Tibial artery (tissue), 4 donors: ENCODE measurements at regions of chr16 and their contacts with region 1.

Region 1: DNA sequence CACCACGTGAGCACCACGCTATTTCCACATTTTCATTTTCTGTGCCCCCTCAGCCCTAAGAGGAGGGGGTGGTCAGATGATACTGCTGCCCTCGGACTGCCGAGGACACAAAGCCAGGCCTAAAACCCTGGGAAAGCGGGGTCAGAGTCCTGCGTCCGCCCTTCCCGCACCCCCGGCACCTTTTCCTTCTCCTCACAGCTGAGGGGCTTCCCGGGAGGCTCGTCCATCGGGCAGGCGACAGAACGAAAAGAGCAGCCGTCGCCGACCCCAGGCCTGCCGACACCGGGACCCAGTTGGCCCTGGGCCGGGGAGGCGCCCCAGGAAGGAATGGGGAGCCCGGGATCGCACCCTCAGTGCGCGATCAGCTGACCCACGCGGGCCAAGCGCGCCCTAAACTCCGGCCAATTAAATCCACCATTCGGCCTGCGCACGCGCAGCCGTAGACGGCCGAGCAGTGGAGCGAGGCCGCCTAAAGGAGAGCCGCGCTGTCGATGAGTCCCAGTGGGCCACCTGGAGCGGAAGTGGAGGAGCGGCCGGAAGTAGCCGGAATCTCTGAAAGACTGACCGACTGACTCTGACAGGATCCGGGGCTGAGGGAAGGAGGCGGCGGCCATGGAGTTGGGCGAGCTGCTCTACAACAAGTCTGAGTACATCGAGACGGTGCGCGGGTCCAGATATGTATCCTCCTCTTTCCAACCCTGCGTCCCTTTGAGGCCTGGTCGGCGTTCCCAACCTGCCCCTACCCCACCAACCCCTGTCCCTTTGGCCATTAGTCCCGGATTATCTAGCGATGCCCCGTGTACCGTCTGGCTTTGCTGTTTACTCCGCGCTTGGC is at the starts of genes DCTN5 and PALB2:
- DNase-seq: peak; percentile 93 to 96
- H3K4me3 ChIP-seq: peak within 1 kb of the TSS; percentile 64 to 87
- H3K27ac ChIP-seq: peak within 1 kb of the TSS; percentile 76 to 90
- H3K4me1 ChIP-seq: peaks cover 0 to 29% (median 19%) of the 10 kb centered on the region in 4 donors
- H3K27me3 ChIP-seq: no peaks in the 10 kb centered on the region
- CTCF ChIP-seq: peak in 1 of 2 experiments; percentile 9

Region 2: DNA sequence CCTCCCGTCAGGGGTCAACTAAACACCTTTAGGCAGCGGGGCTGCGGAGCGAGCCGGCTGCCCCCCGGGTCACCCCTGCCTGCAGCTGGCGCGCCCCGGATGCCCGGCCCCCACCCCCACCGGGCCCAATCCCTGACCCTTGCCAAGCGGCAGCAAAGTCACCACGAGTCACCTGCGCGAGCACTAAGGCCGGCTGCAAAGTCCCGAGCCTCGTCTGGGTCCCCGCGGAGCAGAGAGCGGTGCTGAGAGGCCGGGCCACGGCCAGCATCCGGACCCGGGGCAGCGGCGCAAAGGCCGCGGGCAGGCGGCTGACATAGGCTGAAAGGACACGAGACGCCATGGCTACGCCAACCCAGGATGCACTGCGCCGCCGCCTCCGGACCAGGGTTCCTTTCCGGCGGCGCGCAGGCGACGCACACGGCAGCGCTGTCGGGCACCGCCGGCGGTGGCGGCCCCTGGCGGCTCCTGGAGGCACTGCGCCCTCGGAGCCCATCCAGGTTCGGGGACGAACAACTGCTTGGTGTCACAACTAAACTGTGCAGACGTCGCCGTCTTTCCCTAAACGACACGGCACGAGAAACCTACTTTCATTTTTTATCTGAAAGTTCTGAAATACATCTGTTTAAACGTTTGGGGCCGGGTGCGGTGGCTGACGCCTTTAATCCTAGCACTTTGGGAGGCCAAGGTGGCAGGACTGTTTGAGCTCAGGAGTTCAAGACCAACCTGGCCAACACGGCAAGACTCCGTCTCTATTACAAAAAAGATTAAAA is 45.0 kb before region 1 on chr16 and contains the start of gene NDUFAB1:
- intact Hi-C with region 1: loop called (anchors 5 kb)
- DNase-seq: peak; percentile 86 to 93
- H3K4me3 ChIP-seq: peak within 1 kb of the TSS; percentile 80 to 88
- H3K27ac ChIP-seq: peak within 1 kb of the TSS; percentile 80 to 83
- H3K4me1 ChIP-seq: peaks cover 0 to 18% (median 14%) of the 10 kb centered on the region in 4 donors
- H3K27me3 ChIP-seq: no peaks in the 10 kb centered on the region
- CTCF ChIP-seq: peak; percentile 99 to 100